ENCODE measurements at regions of chr12 and their contacts with region 1.

Region 1: GRCh38 chr12:50825372-50825838 is 17.3 kb upstream of the TMPRSS12 start:
- DNase-seq: peak; percentile 43
- H3K4me3 ChIP-seq: no peak overlapping the region
- H3K27ac ChIP-seq: no peak overlapping the region
- H3K4me1 ChIP-seq: peaks cover 9% of the 10 kb centered on the region
- H3K27me3 ChIP-seq: no peaks in the 10 kb centered on the region
- CTCF ChIP-seq: peak; percentile 32 to 37

Region 2: DNA sequence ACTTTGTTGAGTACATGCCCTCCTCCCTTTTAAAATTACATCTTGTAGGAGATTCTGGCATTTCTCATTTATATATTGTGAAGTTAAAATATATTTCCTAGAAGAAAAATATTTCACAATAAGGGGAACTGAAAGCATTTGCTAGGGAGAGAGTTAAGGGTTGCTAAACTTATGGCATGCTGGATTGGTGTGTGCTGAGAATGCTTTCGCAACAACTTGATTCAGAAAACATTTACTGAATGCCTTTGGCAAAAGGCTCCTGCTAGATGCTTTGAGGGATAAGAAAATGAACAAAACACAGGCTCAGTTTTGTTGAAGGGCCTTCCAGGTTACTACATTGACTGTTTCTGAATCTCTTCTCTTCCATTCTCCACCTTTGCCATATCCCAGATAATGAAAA is 253.1 kb before region 1 on chr12:
- CTCF ChIA-PET with region 1: interaction called, 10 read pairs
- dilution Hi-C with region 1: no loop called
- in situ Hi-C with region 1: no loop called
- intact Hi-C with region 1: no loop called
- DNase-seq: peak; percentile 78
- H3K4me3 ChIP-seq: no peak overlapping the region
- H3K27ac ChIP-seq: peak overlapping the region; percentile 26
- H3K4me1 ChIP-seq: peaks cover 35% of the 10 kb centered on the region
- H3K27me3 ChIP-seq: no peaks in the 10 kb centered on the region
- CTCF ChIP-seq: no peak

Region 3: GRCh38 chr12:50986966-50987737 is 161.7 kb after region 1 on chr12:
- CTCF ChIA-PET with region 1: interaction called, 4 read pairs
- dilution Hi-C with region 1: no loop called
- in situ Hi-C with region 1: no loop called
- intact Hi-C with region 1: loop called (anchors 1 kb)
- DNase-seq: peak; percentile 32
- H3K4me3 ChIP-seq: no peak overlapping the region
- H3K27ac ChIP-seq: no peak overlapping the region
- H3K4me1 ChIP-seq: peaks cover 7% of the 10 kb centered on the region
- H3K27me3 ChIP-seq: no peaks in the 10 kb centered on the region
- CTCF ChIP-seq: peak; percentile 31 to 79

Region 4: DNA sequence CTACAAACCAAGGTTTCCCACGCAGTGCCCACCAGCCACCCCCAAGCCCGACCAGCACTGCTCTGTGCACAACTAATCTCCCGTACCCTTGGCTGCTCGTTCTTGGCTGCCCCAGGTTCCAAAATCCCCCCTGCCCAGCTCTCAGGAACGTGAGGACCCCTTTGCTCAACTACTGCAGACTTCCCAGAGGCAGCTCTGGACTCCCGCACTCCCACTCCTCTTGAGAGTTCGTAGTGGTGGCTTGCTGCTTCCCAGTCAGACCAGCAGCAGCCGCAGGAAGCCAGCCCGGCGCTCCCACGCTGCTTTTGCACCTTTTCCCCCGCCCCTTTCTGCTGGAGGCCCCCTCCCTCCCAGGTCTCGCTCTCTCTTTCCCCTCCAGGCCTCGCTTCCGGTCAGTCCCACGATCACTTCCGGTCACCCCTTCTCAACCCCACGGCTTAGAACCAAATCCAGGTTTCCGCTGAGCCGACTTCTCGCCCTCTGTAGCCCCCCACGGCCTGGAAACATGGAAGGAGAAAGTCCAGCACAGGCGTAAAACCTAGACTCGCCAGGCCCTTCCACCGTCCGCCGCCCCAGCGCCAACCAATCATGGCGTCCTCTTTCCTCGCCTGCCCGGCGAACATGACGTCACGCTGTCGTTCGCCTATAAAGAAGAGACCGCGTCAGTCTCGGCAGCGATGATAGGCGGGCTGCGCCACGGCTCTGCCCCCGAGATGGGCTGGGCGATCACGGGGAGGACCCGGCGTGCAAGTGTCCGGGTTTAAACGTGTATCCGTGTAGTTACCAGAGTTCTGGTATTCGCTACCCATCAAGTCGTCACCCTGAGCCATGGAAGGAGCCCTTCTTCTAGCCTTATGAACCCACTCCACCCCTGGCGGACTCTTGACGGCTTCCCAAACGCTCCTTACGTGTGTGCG is 347.4 kb after region 1 on chr12 and contains the start of gene TFCP2:
- CTCF ChIA-PET with region 1: no interaction called
- dilution Hi-C with region 1: no loop called
- in situ Hi-C with region 1: no loop called
- intact Hi-C with region 1: loop called (anchors 10 kb)
- DNase-seq: peak; percentile 93
- H3K4me3 ChIP-seq: peak within 1 kb of the TSS; percentile 67 to 80 (median 74)
- H3K27ac ChIP-seq: peak within 1 kb of the TSS; percentile 93
- H3K4me1 ChIP-seq: no peaks in the 10 kb centered on the region
- H3K27me3 ChIP-seq: no peaks in the 10 kb centered on the region
- CTCF ChIP-seq: no peak
- total RNA-seq, gene TFCP2: 12.0 to 32.7 TPM

Region 5: DNA sequence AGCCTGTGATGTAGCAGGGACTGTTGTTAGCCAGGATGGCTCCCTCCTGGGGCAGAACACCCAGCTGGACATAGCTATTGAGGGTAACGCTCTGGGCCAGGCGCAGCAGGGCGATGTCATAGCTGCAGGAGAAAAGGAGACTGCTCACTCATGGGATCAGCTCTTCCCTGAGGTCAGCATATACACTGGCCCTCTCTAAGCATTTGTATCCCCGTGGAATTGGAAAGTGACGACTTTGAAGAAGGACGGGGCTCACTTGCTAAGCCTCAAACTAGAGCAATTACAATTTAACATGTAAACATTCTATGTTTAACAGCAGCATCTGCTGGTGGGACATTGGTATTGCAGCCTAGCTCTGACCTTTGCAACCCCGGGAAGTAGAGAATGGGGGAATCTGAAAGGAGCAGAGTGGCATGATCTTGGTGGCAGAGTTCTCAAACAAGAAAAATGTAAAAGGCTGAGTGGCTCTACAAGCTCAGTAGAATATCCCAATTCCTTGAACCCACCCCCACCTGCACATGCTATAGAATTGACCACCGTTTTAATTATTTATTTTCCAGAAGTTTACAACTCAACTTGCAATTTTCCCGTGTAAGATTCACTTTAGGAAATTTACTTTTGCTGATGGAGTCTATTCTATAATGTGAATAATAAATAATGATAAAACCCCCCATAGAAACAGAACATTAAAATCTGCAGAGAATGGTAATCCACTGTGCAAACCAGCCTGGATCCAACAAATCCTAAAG is 516.0 kb after region 1 on chr12:
- CTCF ChIA-PET with region 1: interaction called, 3 read pairs
- dilution Hi-C with region 1: no loop called
- in situ Hi-C with region 1: no loop called
- intact Hi-C with region 1: loop called (anchors 1 kb)
- DNase-seq: peak; percentile 48
- H3K4me3 ChIP-seq: no peak overlapping the region
- H3K27ac ChIP-seq: no peak overlapping the region
- H3K4me1 ChIP-seq: peaks cover 2% of the 10 kb centered on the region
- H3K27me3 ChIP-seq: no peaks in the 10 kb centered on the region
- CTCF ChIP-seq: peak; percentile 99 to 100